Head of caudate nucleus (tissue), 42 donors: ENCODE measurements at regions of chr5 and their contacts with region 1.

Region 1: GRCh38 chr5:50962934-50963872 is 296.8 kb downstream of the PARP8 start:
- DNase-seq: peak; percentile 63 to 96 (median 88)

Region 2: DNA sequence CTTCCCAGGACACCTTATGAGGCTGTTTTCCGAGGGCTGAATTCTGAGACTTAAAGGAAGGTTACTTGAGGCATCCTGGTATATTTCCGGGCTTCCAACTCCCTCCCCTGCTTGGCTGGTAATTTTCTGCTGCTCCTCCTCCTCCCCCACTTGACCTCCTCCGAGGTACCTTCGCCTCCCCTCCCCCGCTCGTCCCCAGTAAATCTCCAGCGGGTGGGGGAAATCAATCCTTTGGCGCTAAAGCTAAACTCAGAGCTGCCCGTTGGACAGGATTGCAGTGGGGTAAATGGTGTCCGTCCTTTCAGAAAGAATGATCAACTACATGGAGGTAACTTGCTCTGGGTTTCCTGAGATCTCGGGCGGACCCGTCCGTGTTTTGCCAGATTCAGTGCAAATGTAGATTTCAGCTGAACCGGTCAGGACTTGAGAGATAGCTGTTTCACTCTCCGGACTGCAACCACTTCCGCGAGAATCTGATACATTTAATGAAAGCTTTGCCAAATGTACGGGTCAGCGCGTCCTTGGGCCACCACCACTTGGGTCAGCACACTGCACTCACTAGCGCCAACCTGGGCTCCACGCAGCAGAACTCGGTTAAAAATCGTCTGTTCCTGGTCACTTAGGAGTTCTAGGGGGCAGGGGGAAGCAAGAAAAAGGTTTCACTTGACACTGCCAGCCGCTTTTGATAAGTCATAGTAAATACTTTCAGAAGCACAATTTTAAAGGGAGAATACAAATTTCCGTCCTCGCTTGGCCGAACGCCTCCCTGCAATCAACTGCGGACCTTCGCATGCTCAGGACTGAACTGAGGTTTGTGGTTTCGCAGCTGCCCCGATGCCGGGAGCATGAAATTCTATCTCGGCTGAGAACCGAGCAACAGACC is 415.5 kb after region 1 on chr5:
- intact Hi-C with region 1: loop called (anchors 5 kb)
- DNase-seq: peak in 1 of 42 donors; percentile 36

Region 3: GRCh38 chr5:52007230-52007858 is 1044.1 kb after region 1 on chr5:
- intact Hi-C with region 1: loop called (anchors 5 kb)
- DNase-seq: peak in 23 of 42 donors; percentile 5 to 63 (median 26)

Region 4: DNA sequence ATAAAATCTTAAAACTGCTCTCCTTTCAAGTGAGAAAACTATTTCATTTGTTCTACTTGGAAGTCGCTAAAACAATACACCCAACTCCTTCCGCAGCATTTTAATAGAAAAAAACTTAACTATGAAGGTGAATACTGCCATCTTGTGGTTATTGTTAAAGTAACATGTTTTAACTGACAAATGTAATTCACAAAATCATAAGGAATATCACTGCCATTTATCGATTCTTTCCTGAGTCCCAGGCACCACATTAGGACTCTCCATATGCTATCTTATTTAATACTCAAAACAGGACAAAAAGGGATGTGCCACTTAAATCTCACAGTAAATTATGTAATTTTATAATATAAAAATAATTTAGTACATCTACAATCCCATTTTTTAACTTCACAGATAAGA is 1694.0 kb after region 1 on chr5:
- intact Hi-C with region 1: loop called (anchors 5 kb)
- DNase-seq: no peak